ENCODE measurements at regions of chr22 and their contacts with region 1.

Region 1: GRCh38 chr22:27480487-27480886 is 321.1 kb downstream of the MN1 start:
- DNase-seq: peak in 9 of 10 donors; percentile 31 to 75 (median 57)
- H3K4me3 ChIP-seq: no peak overlapping the region
- H3K27ac ChIP-seq: peak overlapping the region in 45 of 59 donors; percentile 13 to 86 (median 67)
- H3K27me3 ChIP-seq: peaks cover 0 to 9% (median 0%) of the 10 kb centered on the region in 45 donors
- CTCF ChIP-seq: peak in 10 of 56 donors; percentile 10 to 39 (median 18)

Region 2: GRCh38 chr22:27462190-27462589 is 18.3 kb before region 1 on chr22:
- intact Hi-C with region 1: loop called in 1 of 2 experiments (anchors 2 kb)
- DNase-seq: peak in 9 of 10 donors; percentile 34 to 73 (median 60)
- H3K4me3 ChIP-seq: peak overlapping the region in 7 of 59 donors; percentile 3 to 33 (median 18)
- H3K27ac ChIP-seq: peak overlapping the region in 57 of 59 donors; percentile 32 to 97 (median 81)
- H3K27me3 ChIP-seq: peaks cover 0 to 13% (median 0%) of the 10 kb centered on the region in 45 donors
- CTCF ChIP-seq: peak in 6 of 56 donors; percentile 9 to 25 (median 20)

Region 3: GRCh38 chr22:27597703-27598444 is 117.4 kb after region 1 on chr22:
- intact Hi-C with region 1: no loop called
- DNase-seq: no peak
- H3K4me3 ChIP-seq: no peak overlapping the region
- H3K27ac ChIP-seq: no peak overlapping the region
- H3K27me3 ChIP-seq: no peaks in the 10 kb centered on the region
- CTCF ChIP-seq: peak in 2 of 56 donors; percentile 20 to 22

Measured in dorsolateral prefrontal cortex (tissue), 120 donors.